Psoas muscle (tissue), 8 donors: ENCODE measurements at regions of chr16 and their contacts with region 1.

Region 1: GRCh38 chr16:51507286-51507685 is 356.2 kb upstream of the SALL1 start:
- DNase-seq: no peak
- ATAC-seq: no peak
- H3K4me3 ChIP-seq: no peak overlapping the region
- H3K27ac ChIP-seq: no peak overlapping the region
- H3K4me1 ChIP-seq: no peaks in the 10 kb centered on the region
- H3K27me3 ChIP-seq: no peaks in the 10 kb centered on the region
- CTCF ChIP-seq: no peak

Region 2: DNA sequence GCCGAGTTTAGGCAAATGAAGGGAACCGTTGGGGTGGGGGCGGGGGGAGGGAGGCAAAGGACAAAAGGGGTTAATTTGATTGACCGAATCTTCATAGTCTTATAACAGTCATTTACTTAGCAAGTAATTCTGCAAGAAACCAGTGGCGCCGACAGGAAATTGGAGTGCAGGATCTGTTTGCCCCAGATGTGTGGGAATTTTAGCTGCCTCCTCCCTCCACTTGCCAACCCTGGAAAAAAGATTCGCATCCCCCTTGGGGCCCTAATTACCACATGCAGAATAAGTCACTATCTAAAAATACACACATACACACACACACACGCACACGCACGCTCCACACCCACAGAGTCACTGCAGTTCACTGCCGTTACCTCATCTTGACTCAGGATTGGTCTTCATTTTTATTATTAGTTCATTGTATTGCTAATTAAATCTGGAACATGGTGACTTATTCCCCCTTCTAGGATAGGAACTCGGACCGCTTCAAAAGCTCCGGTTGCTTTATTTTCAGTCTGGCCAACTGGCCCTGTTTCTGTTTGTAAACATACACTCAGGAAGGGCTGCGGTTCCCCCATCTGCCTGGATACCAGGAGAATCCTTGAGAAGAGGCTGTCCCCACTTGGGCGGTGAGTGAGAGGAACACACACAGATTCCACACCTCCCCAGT is 114.6 kb before region 1 on chr16:
- intact Hi-C with region 1: no loop called
- DNase-seq: peak; percentile 12 to 52
- ATAC-seq: peak in 2 of 4 donors; percentile 49 to 54
- H3K4me3 ChIP-seq: no peak overlapping the region
- H3K27ac ChIP-seq: no peak overlapping the region
- H3K4me1 ChIP-seq: no peaks in the 10 kb centered on the region
- H3K27me3 ChIP-seq: peaks cover 0 to 3% (median 0%) of the 10 kb centered on the region in 3 donors
- CTCF ChIP-seq: no peak

Region 3: GRCh38 chr16:51450909-51451308 is 56.4 kb before region 1 on chr16:
- intact Hi-C with region 1: no loop called
- DNase-seq: no peak
- ATAC-seq: no peak
- H3K4me3 ChIP-seq: no peak overlapping the region
- H3K27ac ChIP-seq: no peak overlapping the region
- H3K4me1 ChIP-seq: no peaks in the 10 kb centered on the region
- H3K27me3 ChIP-seq: no peaks in the 10 kb centered on the region
- CTCF ChIP-seq: no peak

Region 4: DNA sequence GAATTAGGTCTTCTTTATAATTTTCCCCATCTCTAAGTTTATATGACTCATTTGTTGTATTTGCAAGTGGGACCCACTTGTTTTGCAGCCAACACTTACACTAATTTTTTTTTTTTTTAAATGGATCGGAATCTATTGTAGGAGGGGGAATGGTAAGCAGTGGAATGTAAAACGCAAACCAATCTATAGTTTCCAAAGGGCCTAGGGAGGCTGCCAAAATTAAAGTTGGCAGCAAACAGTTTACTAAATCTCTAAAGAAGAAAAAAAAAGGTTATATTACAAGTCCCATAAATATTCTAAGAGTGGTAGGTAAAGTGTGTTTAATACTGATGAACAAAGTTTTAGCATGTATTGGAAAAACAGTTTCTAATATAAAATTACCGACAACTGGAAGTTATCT is 60.6 kb after region 1 on chr16:
- intact Hi-C with region 1: loop called in 1 of 2 experiments (anchors 2 kb)
- DNase-seq: no peak
- ATAC-seq: no peak
- H3K4me3 ChIP-seq: no peak overlapping the region
- H3K27ac ChIP-seq: no peak overlapping the region
- H3K4me1 ChIP-seq: no peaks in the 10 kb centered on the region
- H3K27me3 ChIP-seq: peaks cover 0 to 1% (median 0%) of the 10 kb centered on the region in 3 donors
- CTCF ChIP-seq: no peak